Right cardiac atrium (tissue), 5 donors: ENCODE measurements at regions of chr9 and their contacts with region 1.

Region 1: GRCh38 chr9:5479994-5480694 is 29.8 kb downstream of the CD274 start:
- DNase-seq: no peak
- ATAC-seq: no peak
- H3K4me3 ChIP-seq: no peak overlapping the region
- H3K27ac ChIP-seq: no peak overlapping the region
- H3K4me1 ChIP-seq: no peaks in the 10 kb centered on the region
- H3K27me3 ChIP-seq: no peaks in the 10 kb centered on the region

Region 2: DNA sequence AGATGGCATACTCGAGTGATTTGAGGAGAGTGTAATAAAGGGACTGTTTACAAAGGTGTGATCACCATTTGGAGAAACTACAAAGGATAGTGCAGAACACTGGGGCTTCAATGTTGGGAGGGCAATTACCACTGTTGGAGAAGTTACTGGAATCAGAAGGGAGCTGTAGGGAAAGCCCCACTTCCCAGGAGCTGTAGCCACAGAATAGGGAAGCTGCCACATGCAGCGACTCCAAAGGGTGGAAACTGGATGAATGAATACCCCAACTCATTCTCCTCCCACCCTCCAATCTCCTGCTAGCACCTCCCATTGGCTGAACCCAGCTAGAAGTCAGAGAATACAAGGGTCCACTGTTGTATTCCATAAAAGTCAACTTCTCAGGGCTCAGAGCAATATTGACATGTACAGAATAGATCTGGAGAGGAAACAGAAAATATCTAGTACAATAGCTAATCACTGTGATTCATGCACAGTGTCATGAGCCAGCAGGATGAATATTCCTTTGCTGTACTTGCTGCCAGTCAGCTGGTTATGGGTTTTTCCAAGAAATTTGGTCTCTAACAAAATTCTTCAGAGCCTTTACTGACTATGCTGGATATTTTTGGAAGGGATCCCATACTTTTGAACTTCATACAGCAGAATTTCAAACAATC is 69.6 kb after region 1 on chr9:
- intact Hi-C with region 1: loop called in 1 of 4 experiments (anchors 10 kb)
- DNase-seq: no peak
- ATAC-seq: no peak
- H3K4me3 ChIP-seq: no peak overlapping the region
- H3K27ac ChIP-seq: no peak overlapping the region
- H3K4me1 ChIP-seq: peaks cover 2% of the 10 kb centered on the region
- H3K27me3 ChIP-seq: no peaks in the 10 kb centered on the region